MCF 10A (cell line): ENCODE measurements at regions of chr12 and their contacts with region 1.

Region 1: DNA sequence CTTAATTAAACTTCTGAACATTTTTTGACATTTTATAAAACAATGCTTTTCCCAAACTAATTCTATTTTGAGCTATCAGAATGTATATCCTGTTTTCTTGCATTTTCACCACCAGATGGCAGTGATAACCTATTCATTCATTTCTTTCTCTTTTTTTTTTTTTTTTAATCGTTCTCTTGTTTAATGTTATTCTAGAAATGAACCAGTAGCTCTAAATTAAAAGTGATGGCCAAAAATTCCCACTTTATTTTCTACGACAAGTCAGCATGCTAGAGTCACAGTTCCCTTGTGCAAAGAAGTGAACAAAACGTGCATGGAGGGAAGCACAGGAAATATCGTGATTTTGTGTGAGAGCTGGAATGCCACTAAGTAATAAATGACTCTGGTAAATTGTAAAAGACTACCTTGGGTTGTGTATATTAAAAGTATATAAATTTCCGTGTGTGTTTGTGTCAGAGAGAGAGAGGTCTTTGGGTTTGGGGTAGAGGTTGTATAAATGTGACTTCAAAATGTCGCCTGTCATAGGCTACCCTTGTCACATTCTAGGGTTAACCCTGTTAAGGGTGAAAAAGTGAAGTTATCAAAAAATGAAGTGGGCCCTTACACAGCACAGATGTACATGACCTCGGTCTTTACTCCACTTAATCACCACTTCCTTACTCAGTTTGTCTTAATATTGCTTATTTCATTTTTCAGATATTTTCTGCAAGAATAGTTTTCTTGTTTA is 40.4 kb upstream of the LDHB start:
- DNase-seq: peak; percentile 52
- H3K4me3 Mint-ChIP-seq: peak overlapping the region; percentile 47
- H3K27ac Mint-ChIP-seq: no peak overlapping the region
- H3K4me1 Mint-ChIP-seq: peaks cover 5% of the 10 kb centered on the region
- H3K27me3 Mint-ChIP-seq: no peaks in the 10 kb centered on the region
- CTCF ChIP-seq: peak; percentile 41

Region 2: DNA sequence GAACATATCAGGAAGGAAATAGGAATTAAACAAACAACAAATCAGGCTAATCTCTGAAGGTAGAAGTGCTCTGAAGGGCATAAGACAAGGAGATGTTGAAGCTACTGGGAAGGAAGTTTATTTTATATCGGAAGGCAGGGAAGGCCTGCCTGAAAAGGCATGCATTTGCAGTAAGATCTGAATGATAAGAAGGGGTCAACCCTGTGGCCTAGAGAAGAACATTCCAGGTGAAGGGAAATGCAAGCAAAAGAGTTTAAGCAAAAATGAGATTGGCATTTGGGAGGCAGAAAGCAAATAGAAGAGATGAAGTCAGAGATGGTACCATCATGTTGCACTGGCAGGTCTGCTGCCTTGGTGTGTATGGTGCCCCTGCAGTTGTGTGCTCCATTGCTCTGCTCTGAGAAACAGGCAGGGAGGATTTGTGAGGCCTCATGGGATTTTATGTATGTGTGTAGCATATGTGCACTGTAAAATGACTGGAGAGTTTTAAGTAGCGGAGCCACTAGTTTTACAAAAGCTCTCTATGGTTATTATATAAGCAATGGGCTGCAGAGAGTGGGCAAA is 47.2 kb before region 1 on chr12:
- CTCF ChIA-PET with region 1: interaction called, 10 read pairs
- POLR2A ChIA-PET with region 1: no interaction called
- intact Hi-C with region 1: no loop called
- DNase-seq: no peak
- H3K4me3 Mint-ChIP-seq: no peak overlapping the region
- H3K27ac Mint-ChIP-seq: peak overlapping the region; percentile 25
- H3K4me1 Mint-ChIP-seq: peaks cover 36% of the 10 kb centered on the region
- H3K27me3 Mint-ChIP-seq: no peaks in the 10 kb centered on the region
- CTCF ChIP-seq: no peak

Region 3: GRCh38 chr12:21710948-21711775 is 13.1 kb after region 1 on chr12:
- CTCF ChIA-PET with region 1: interaction called, 14 read pairs
- POLR2A ChIA-PET with region 1: interaction called, 3 read pairs
- intact Hi-C with region 1: no loop called
- DNase-seq: peak; percentile 4
- H3K4me3 Mint-ChIP-seq: no peak overlapping the region
- H3K27ac Mint-ChIP-seq: no peak overlapping the region
- H3K4me1 Mint-ChIP-seq: peaks cover 9% of the 10 kb centered on the region
- H3K27me3 Mint-ChIP-seq: peaks cover 40% of the 10 kb centered on the region
- CTCF ChIP-seq: no peak

Region 4: GRCh38 chr12:21773263-21773741 is 75.2 kb after region 1 on chr12:
- CTCF ChIA-PET with region 1: no interaction called
- POLR2A ChIA-PET with region 1: no interaction called
- intact Hi-C with region 1: no loop called
- DNase-seq: peak; percentile 5
- H3K4me3 Mint-ChIP-seq: no peak overlapping the region
- H3K27ac Mint-ChIP-seq: no peak overlapping the region
- H3K4me1 Mint-ChIP-seq: no peaks in the 10 kb centered on the region
- H3K27me3 Mint-ChIP-seq: peaks cover 21% of the 10 kb centered on the region
- CTCF ChIP-seq: no peak

Region 5: GRCh38 chr12:21831791-21832344 is 133.8 kb after region 1 on chr12:
- CTCF ChIA-PET with region 1: no interaction called
- POLR2A ChIA-PET with region 1: no interaction called
- intact Hi-C with region 1: no loop called
- DNase-seq: no peak
- H3K4me3 Mint-ChIP-seq: no peak overlapping the region
- H3K27ac Mint-ChIP-seq: no peak overlapping the region
- H3K4me1 Mint-ChIP-seq: no peaks in the 10 kb centered on the region
- H3K27me3 Mint-ChIP-seq: peaks cover 33% of the 10 kb centered on the region
- CTCF ChIP-seq: no peak

Region 6: DNA sequence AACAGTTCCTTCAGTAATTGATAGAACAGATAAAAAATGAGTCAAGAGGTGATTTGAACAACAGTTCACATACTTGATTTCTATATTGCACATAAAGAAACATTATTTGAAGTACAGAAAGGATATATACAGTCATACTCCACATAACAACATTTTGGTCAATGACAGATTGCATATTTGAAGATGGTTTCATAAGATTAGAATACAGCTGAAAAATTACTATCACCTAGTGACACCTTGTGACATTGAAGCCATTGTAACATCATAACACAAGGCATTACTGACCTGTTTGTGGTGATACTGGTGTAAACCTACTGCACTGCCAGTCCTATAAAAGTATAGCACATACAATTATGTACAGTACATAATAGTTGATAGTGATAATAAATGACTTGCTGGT is 286.3 kb after region 1 on chr12:
- CTCF ChIA-PET with region 1: interaction called, 236 read pairs
- POLR2A ChIA-PET with region 1: interaction called, 8 read pairs
- intact Hi-C with region 1: loop called (anchors 1 kb)
- DNase-seq: no peak
- H3K4me3 Mint-ChIP-seq: no peak overlapping the region
- H3K27ac Mint-ChIP-seq: no peak overlapping the region
- H3K4me1 Mint-ChIP-seq: no peaks in the 10 kb centered on the region
- H3K27me3 Mint-ChIP-seq: peaks cover 39% of the 10 kb centered on the region
- CTCF ChIP-seq: no peak

Region 7: DNA sequence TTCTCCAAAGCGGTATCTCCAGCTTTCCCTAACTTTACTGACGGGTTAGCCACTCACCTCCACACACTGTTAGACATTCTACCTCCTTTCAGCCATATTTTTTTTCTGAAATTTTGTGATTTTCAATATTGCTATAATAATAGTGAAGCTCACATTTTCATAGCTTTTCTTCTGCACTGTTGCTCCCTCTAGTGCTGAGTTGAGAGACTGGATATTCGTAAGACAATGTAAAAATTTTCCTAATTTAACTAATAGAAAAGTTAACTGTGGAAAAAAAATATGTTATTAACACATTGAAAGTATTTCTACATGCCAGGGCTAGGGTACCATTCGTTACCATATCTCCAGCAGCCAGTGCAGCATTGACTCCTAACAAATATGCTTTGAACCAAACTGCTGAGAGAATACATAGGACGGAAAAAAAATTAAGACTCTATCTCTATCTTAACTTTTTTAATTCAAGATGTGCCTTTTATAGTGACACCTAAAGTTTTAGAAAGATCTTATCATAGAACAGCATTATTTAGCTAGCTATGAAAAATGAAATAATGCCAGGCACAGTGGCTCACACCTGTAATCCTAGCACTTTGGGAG is 291.8 kb after region 1 on chr12:
- CTCF ChIA-PET with region 1: interaction called, 236 read pairs
- POLR2A ChIA-PET with region 1: interaction called, 8 read pairs
- intact Hi-C with region 1: loop called (anchors 1 kb)
- DNase-seq: peak; percentile 39
- H3K4me3 Mint-ChIP-seq: no peak overlapping the region
- H3K27ac Mint-ChIP-seq: no peak overlapping the region
- H3K4me1 Mint-ChIP-seq: no peaks in the 10 kb centered on the region
- H3K27me3 Mint-ChIP-seq: peaks cover 25% of the 10 kb centered on the region
- CTCF ChIP-seq: peak; percentile 57

Region 8: DNA sequence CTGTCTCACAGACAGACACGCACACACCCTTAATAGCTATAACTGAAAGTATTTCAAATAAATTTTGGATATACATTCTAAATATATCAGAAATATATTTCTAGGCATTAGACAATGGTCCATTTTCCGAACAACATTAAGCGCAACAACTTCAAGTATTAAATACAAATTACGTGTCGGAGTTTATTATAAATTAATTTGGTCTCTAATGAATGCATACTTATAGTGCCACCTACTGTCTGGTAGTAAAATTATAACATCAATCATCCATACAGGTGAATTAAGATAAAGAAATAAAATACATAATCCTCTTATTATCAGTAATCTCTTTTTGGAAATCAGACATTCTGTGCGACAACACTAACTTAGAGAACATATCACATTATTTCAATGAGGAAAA is 320.8 kb after region 1 on chr12:
- CTCF ChIA-PET with region 1: interaction called, 93 read pairs
- POLR2A ChIA-PET with region 1: interaction called, 4 read pairs
- intact Hi-C with region 1: loop called (anchors 1 kb)
- DNase-seq: peak; percentile 34
- H3K4me3 Mint-ChIP-seq: no peak overlapping the region
- H3K27ac Mint-ChIP-seq: no peak overlapping the region
- H3K4me1 Mint-ChIP-seq: no peaks in the 10 kb centered on the region
- H3K27me3 Mint-ChIP-seq: no peaks in the 10 kb centered on the region
- CTCF ChIP-seq: peak; percentile 43